CD8-positive, alpha-beta T cell (primary cell): ENCODE measurements at regions of chr20 and their contacts with region 1.

Region 1: GRCh38 chr20:944774-945410 is 28.8 kb upstream of the ANGPT4 start:
- DNase-seq: no peak
- ATAC-seq: no peak
- H3K4me3 ChIP-seq: no peak overlapping the region
- H3K4me3 Mint-ChIP-seq: no peak overlapping the region
- H3K27ac ChIP-seq: no peak overlapping the region
- H3K27ac Mint-ChIP-seq: no peak overlapping the region
- H3K4me1 ChIP-seq: no peaks in the 10 kb centered on the region
- H3K4me1 Mint-ChIP-seq: no peaks in the 10 kb centered on the region
- H3K27me3 ChIP-seq: no peaks in the 10 kb centered on the region
- H3K27me3 Mint-ChIP-seq: peaks cover 19% of the 10 kb centered on the region
- CTCF ChIP-seq: no peak

Region 2: DNA sequence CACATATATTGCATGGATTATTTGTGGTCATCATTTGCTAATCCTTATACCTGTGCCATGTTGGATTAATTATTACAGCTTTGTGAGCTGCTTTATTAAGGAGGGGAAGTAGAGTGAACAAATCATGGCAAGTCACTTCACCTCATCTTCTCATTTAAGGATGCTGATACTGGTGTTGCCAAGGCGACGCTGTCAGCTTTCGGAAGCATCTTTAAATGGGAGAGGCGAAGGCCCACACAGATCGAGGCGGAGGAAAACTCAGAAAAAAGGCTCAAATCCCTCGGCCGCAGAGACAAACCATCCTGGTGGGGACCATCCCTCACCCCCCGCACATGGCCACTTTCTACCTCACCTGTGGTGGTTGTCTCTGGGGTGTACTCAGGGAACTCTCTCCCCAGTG is 76.6 kb before region 1 on chr20:
- CTCF ChIA-PET with region 1: no interaction called
- POLR2A ChIA-PET with region 1: no interaction called
- intact Hi-C with region 1: loop called in 1 of 2 experiments (anchors 5 kb)
- DNase-seq: no peak
- ATAC-seq: no peak
- H3K4me3 ChIP-seq: no peak overlapping the region
- H3K4me3 Mint-ChIP-seq: no peak overlapping the region
- H3K27ac ChIP-seq: no peak overlapping the region
- H3K27ac Mint-ChIP-seq: no peak overlapping the region
- H3K4me1 ChIP-seq: no peaks in the 10 kb centered on the region
- H3K4me1 Mint-ChIP-seq: peaks cover 1% of the 10 kb centered on the region
- H3K27me3 ChIP-seq: no peaks in the 10 kb centered on the region
- H3K27me3 Mint-ChIP-seq: no peaks in the 10 kb centered on the region
- CTCF ChIP-seq: no peak

Region 3: GRCh38 chr20:963795-964194 is 18.9 kb after region 1 on chr20:
- CTCF ChIA-PET with region 1: no interaction called
- POLR2A ChIA-PET with region 1: no interaction called
- intact Hi-C with region 1: no loop called
- DNase-seq: no peak
- ATAC-seq: no peak
- H3K4me3 ChIP-seq: no peak overlapping the region
- H3K4me3 Mint-ChIP-seq: no peak overlapping the region
- H3K27ac ChIP-seq: no peak overlapping the region
- H3K27ac Mint-ChIP-seq: no peak overlapping the region
- H3K4me1 ChIP-seq: no peaks in the 10 kb centered on the region
- H3K4me1 Mint-ChIP-seq: no peaks in the 10 kb centered on the region
- H3K27me3 ChIP-seq: no peaks in the 10 kb centered on the region
- H3K27me3 Mint-ChIP-seq: peaks cover 16% of the 10 kb centered on the region
- CTCF ChIP-seq: no peak